ENCODE measurements at regions of chr10 and their contacts with region 1.

Region 1: DNA sequence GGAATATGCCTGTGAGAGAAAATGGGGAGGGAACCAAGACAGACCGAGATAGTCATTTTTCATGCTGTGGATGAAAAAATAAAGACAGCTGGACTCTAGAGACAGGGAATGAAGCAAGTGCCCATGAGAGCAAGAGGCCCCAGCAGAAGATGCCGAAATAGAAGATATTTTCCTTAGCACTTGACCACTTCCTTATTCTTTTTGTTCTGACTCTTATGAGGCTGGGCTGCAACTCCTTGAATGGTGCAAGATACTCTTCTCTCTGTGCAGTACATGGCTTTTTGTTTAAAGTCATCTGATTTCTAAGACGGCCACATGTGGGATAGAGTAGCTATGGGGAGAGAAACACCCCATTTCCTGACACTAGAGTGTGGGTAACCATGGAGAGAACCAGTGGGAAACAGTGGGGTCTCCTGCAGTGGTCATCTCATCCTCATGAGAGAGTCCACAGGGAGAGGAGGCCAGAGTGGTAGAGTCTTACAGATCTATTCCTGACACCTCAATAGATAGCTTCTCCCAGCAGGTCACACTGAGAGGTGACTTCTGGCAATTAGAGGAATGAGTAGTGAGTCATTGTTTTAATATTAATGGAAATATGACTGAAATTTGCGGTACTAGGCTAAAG is 18.0 kb upstream of the VCL start:
- DNase-seq: peak in 1 of 3 donors; percentile 49
- H3K4me3 ChIP-seq: no peak overlapping the region
- H3K27ac ChIP-seq: no peak overlapping the region
- H3K4me1 ChIP-seq: peaks cover 4 to 27% (median 18%) of the 10 kb centered on the region in 4 experiments
- H3K27me3 ChIP-seq: no peaks in the 10 kb centered on the region

Region 2: GRCh38 chr10:73899423-73899822 is 80.5 kb before region 1 on chr10:
- CTCF ChIA-PET with region 1: no interaction called
- POLR2A ChIA-PET with region 1: no interaction called
- DNase-seq: peak in 2 of 3 donors; percentile 55 to 66
- H3K4me3 ChIP-seq: no peak overlapping the region
- H3K27ac ChIP-seq: no peak overlapping the region
- H3K4me1 ChIP-seq: peaks cover 5 to 42% (median 7%) of the 10 kb centered on the region in 4 experiments
- H3K27me3 ChIP-seq: no peaks in the 10 kb centered on the region

Region 3: GRCh38 chr10:73991884-73992245 is 11.9 kb after region 1 on chr10:
- CTCF ChIA-PET with region 1: interaction called, 19 read pairs
- POLR2A ChIA-PET with region 1: interaction called, 3 read pairs
- DNase-seq: peak; percentile 88 to 93 (median 91)
- H3K4me3 ChIP-seq: peak overlapping the region in 2 of 7 experiments; percentile 1 to 20
- H3K27ac ChIP-seq: no peak overlapping the region
- H3K4me1 ChIP-seq: peaks cover 19 to 44% (median 26%) of the 10 kb centered on the region in 4 experiments
- H3K27me3 ChIP-seq: no peaks in the 10 kb centered on the region

Measured in common myeloid progenitor, CD34-positive (primary cell).